Activated CD4-positive, alpha-beta T cell treated with anti-CD3 and anti-CD28 coated beads, Interleukin-2, amount 10 ng/mL, durations not matched to agents 7 days and 5 days (primary cell): ENCODE measurements at regions of chr14 and their contacts with region 1.

Region 1: DNA sequence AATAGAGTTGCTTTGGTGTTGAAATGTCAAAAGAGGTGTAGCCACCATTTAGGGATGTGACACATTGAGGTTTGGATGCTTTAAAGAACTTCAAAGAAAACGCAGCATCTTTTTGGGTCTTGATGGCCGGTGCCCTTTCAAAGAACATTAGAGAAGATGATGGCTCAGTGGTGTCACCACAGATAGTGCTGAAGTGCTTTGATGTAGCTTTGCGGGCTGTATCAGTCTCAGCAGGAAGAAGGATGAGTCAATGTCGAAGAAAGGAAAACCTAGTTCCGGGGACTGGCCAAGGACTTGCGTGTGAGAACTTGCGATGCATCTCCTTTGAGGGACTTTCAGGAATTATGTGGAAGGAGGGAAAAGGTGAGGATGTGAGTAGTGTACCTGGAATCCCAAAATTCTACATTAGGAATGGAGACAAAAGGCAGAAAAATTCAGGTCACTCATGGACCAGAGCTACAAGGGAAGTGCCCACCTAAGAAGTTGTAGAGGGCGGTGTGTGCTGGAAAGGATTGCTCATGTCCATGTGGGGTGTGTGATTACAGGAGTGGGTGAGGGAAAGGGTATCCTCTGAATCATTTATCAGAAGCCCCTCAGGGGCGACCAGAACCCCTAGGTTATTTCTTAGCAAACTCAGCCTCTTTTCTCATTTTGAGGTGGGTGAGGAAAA is 39.7 kb upstream of the GZMB start:
- DNase-seq: peak; percentile 86
- H3K4me3 Mint-ChIP-seq: peak overlapping the region; percentile 72
- H3K27ac Mint-ChIP-seq: peak overlapping the region; percentile 94
- H3K4me1 Mint-ChIP-seq: peaks cover 86% of the 10 kb centered on the region
- H3K27me3 Mint-ChIP-seq: no peaks in the 10 kb centered on the region

Region 2: GRCh38 chr14:24605435-24606190 is 68.1 kb before region 1 on chr14:
- CTCF ChIA-PET with region 1: interaction called, 11 read pairs
- POLR2A ChIA-PET with region 1: interaction called, 3 read pairs
- DNase-seq: peak; percentile 75
- H3K4me3 Mint-ChIP-seq: peak overlapping the region; percentile 23
- H3K27ac Mint-ChIP-seq: peak overlapping the region; percentile 89
- H3K4me1 Mint-ChIP-seq: peaks cover 55% of the 10 kb centered on the region
- H3K27me3 Mint-ChIP-seq: peaks cover 2% of the 10 kb centered on the region

Region 3: DNA sequence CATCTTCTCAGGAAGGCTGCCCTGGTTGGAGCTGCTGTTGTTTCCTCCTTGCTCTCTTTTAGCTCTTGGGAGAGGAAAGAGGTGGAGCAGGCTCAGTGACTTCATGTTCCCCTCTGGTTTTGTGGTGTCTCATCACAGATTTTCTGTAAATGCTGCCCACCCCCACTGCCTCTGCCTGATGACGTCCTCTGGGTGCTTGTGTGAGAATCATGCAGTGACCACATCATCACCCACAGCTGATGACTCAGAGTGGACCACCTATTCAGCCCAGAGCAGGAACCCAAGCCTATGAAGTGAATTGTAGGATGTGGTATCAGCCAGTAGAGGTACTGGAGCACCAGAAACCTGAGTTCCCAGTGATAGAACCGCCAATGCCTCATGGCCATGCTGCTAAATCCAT is 39.5 kb before region 1 on chr14 and contains the start of gene GZMB:
- CTCF ChIA-PET with region 1: interaction called, 20 read pairs
- POLR2A ChIA-PET with region 1: interaction called, 11 read pairs
- DNase-seq: peak; percentile 59
- H3K4me3 Mint-ChIP-seq: peak within 1 kb of the TSS; percentile 65
- H3K27ac Mint-ChIP-seq: peak within 1 kb of the TSS; percentile 85
- H3K4me1 Mint-ChIP-seq: peaks cover 43% of the 10 kb centered on the region
- H3K27me3 Mint-ChIP-seq: peaks cover 7% of the 10 kb centered on the region
- total RNA-seq, gene GZMB: 77.5 to 105 TPM

Region 4: DNA sequence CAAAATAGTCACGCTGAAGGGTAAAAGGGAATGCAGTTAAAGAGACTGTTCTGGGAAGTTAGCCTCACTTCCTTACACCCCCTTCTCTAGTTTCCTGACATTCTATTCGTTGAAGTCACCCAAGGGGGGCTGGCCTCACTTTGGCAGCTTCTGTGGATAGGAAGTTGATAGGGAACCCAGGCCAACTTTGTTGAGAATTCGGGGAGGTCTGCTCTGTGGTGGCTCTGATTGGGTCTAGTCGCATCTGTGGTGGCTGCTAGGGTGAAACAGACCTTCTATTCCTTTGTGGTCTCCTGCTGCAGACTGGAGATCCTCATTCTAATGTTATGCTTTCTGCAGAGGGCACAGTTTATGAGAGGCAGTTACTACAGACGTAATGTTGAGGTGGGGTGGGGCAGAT is 10.9 kb before region 1 on chr14:
- CTCF ChIA-PET with region 1: interaction called, 17 read pairs
- POLR2A ChIA-PET with region 1: interaction called, 7 read pairs
- DNase-seq: no peak
- H3K4me3 Mint-ChIP-seq: no peak overlapping the region
- H3K27ac Mint-ChIP-seq: peak overlapping the region; percentile 48
- H3K4me1 Mint-ChIP-seq: peaks cover 84% of the 10 kb centered on the region
- H3K27me3 Mint-ChIP-seq: peaks cover 8% of the 10 kb centered on the region